WTC11 (cell line): ENCODE measurements at regions of chr6 and their contacts with region 1.

Region 1: GRCh38 chr6:26122793-26123674 is 35.8 kb downstream of the HFE start:
- DNase-seq: peak; percentile 89
- ATAC-seq: peak; percentile 51
- H3K4me3 Mint-ChIP-seq: peak overlapping the region; percentile 95
- H3K27ac Mint-ChIP-seq: peak overlapping the region; percentile 99
- H3K4me1 Mint-ChIP-seq: peaks cover 40% of the 10 kb centered on the region
- H3K27me3 Mint-ChIP-seq: no peaks in the 10 kb centered on the region
- CTCF ChIP-seq: no peak

Region 2: DNA sequence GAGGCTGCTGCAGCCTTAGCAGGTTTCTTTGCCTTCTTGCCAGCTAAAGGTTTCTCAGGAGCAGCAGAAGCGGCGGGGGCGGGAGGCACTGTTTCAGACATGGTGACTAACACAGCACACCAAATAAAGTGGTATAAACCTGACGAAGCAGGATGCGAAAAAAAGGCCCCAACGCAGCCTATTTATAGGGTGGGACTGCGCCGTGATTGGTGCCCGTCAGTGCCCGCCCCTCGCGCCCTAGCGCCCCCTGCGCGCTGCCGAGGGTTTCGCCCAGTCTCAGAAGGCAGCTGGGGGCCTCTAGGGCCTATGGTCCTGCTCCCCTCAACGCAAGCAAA is 105.4 kb before region 1 on chr6:
- CTCF ChIA-PET with region 1: no interaction called
- POLR2A ChIA-PET with region 1: interaction called, 48 read pairs
- DNase-seq: peak; percentile 83
- ATAC-seq: peak; percentile 33
- H3K4me3 Mint-ChIP-seq: peak overlapping the region; percentile 76
- H3K27ac Mint-ChIP-seq: peak overlapping the region; percentile 96
- H3K4me1 Mint-ChIP-seq: peaks cover 36% of the 10 kb centered on the region
- H3K27me3 Mint-ChIP-seq: no peaks in the 10 kb centered on the region
- CTCF ChIP-seq: no peak

Region 3: GRCh38 chr6:26054857-26055669 is 68.0 kb before region 1 on chr6:
- CTCF ChIA-PET with region 1: interaction called, 3 read pairs
- POLR2A ChIA-PET with region 1: interaction called, 38 read pairs
- DNase-seq: peak; percentile 74
- ATAC-seq: peak; percentile 66
- H3K4me3 Mint-ChIP-seq: peak overlapping the region; percentile 89
- H3K27ac Mint-ChIP-seq: peak overlapping the region; percentile 98
- H3K4me1 Mint-ChIP-seq: peaks cover 29% of the 10 kb centered on the region
- H3K27me3 Mint-ChIP-seq: no peaks in the 10 kb centered on the region
- CTCF ChIP-seq: no peak

Region 4: GRCh38 chr6:26175428-26176181 is 52.6 kb after region 1 on chr6:
- CTCF ChIA-PET with region 1: no interaction called
- POLR2A ChIA-PET with region 1: interaction called, 17 read pairs
- DNase-seq: peak; percentile 46
- ATAC-seq: peak; percentile 7; the same call in 1 of the 2 replicates
- H3K4me3 Mint-ChIP-seq: peak overlapping the region; percentile 25; the same call in 1 of the 2 replicates
- H3K27ac Mint-ChIP-seq: 0 out of 2 replicates have a peak overlapping the region, but pooled peaks have one; percentile 45
- H3K4me1 Mint-ChIP-seq: peaks cover 28% of the 10 kb centered on the region
- H3K27me3 Mint-ChIP-seq: no peaks in the 10 kb centered on the region; the same call in 1 of the 2 replicates
- CTCF ChIP-seq: peak; percentile 28; the same call in 1 of the 2 replicates

Region 5: GRCh38 chr6:26223650-26224546 is 100.9 kb after region 1 on chr6:
- CTCF ChIA-PET with region 1: no interaction called
- POLR2A ChIA-PET with region 1: interaction called, 55 read pairs
- DNase-seq: no peak
- ATAC-seq: peak; percentile 69
- H3K4me3 Mint-ChIP-seq: no peak overlapping the region
- H3K27ac Mint-ChIP-seq: no peak overlapping the region
- H3K4me1 Mint-ChIP-seq: peaks cover 42% of the 10 kb centered on the region
- H3K27me3 Mint-ChIP-seq: no peaks in the 10 kb centered on the region
- CTCF ChIP-seq: no peak

Region 6: DNA sequence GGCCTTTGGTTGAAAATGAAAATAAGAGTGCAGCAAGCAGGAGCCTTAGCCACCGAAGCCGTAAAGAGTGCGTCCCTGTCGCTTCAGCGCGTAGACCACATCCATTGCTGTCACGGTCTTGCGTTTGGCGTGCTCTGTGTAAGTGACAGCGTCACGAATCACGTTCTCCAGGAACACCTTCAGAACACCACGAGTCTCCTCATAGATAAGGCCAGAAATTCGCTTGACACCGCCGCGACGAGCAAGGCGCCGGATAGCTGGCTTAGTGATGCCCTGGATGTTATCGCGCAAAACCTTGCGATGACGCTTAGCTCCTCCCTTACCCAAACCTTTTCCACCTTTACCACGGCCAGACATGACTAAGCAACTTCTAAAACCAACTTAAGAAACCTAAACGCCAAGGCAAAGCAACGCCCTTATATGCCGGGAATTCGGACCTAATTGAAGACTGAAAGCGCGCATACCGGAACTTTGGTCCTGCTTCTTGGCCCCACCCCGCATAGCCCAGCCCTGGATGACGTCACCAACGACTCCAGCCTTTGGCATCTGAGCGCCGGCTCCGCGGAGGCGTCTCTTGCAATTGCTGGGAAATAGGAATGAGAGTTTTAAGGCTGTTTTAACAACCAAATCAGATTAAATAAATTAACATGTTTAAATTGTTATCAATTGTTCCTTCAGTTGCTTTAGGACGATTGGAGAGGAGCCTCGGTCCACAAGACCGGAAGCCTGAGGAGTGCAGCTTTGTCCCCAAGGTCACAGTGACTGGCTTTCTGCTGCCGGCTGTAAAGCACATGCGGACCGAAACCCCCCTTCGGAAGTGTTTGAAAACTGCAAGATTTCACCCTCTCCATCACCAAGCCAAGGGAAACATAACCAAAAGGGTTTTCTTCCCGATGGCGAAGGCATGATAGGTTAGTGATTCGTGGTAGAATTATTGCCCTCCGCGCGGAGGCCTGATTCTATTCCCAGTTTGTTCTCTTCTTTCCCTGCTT is 162.4 kb after region 1 on chr6:
- CTCF ChIA-PET with region 1: no interaction called
- POLR2A ChIA-PET with region 1: interaction called, 12 read pairs
- DNase-seq: peak; percentile 96
- ATAC-seq: peak; percentile 73
- H3K4me3 Mint-ChIP-seq: peak overlapping the region; percentile 97
- H3K27ac Mint-ChIP-seq: peak overlapping the region; percentile 100
- H3K4me1 Mint-ChIP-seq: peaks cover 16% of the 10 kb centered on the region
- H3K27me3 Mint-ChIP-seq: peaks cover 4% of the 10 kb centered on the region
- CTCF ChIP-seq: no peak

Region 7: GRCh38 chr6:27838058-27838944 is 1715.3 kb after region 1 on chr6:
- CTCF ChIA-PET with region 1: no interaction called
- POLR2A ChIA-PET with region 1: interaction called, 24 read pairs
- DNase-seq: peak; percentile 84
- ATAC-seq: peak; percentile 84
- H3K4me3 Mint-ChIP-seq: no peak overlapping the region
- H3K27ac Mint-ChIP-seq: no peak overlapping the region
- H3K4me1 Mint-ChIP-seq: peaks cover 28% of the 10 kb centered on the region
- H3K27me3 Mint-ChIP-seq: no peaks in the 10 kb centered on the region
- CTCF ChIP-seq: no peak